Spleen (tissue), 13 donors: ENCODE measurements at regions of chr1 and their contacts with region 1.

Region 1: GRCh38 chr1:218345673-218346390 is 696 bp downstream of the TGFB2 start:
- DNase-seq: peak; percentile 89
- H3K4me3 ChIP-seq: peak overlapping the region; percentile 44 to 79 (median 58)
- H3K27ac ChIP-seq: peak overlapping the region in 7 of 8 donors; percentile 18 to 81 (median 72)
- H3K4me1 ChIP-seq: peaks cover 11 to 67% (median 50%) of the 10 kb centered on the region in 6 donors
- H3K27me3 ChIP-seq: peaks cover 0 to 32% (median 6%) of the 10 kb centered on the region in 7 donors
- CTCF ChIP-seq: no peak
- POLR2A ChIP-seq: no peak

Region 2: DNA sequence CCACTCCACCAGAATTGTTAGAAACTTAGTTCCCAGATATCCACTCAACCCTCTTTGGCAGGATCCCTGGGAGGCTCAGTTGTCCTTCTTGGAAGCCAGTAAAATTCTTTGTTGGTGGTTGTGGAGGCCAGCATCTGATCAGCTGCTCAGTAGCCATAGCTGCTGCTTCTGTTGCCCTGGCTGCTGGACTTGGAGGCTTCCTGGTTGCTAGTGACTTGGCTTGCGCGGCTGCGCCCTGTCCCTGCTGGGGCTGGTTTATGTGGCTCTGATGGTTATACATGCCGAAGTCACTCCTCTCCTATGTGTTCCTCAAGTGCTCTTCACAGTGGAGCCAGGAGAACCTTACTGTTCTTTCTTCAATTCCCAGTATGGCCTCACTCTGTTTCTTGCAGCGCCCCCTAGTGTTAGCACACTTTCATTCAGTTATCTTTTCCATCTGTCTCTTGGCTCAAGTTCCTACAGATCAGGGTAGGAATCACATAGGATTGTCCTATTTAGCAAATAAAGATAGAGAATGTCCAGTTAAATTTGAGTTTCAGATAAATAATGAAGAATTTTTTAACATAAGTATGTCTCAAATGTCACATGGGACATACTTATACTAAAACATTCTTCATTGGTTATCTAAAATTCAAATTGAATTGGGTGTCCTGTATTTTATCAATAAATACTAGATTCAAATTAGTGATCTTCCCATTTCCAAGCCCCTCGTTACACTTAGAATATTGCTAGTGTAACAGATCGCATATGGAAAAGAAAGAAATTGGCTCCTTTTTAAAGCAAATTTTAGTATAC is 175.7 kb after region 1 on chr1:
- intact Hi-C with region 1: loop called (anchors 10 kb)
- DNase-seq: no peak
- H3K4me3 ChIP-seq: no peak overlapping the region
- H3K27ac ChIP-seq: no peak overlapping the region
- H3K4me1 ChIP-seq: no peaks in the 10 kb centered on the region
- H3K27me3 ChIP-seq: peaks cover 0 to 13% (median 0%) of the 10 kb centered on the region in 7 donors
- CTCF ChIP-seq: peak in 10 of 11 experiments; percentile 25 to 71 (median 54)
- POLR2A ChIP-seq: no peak

Region 3: GRCh38 chr1:218817691-218818465 is 472.0 kb after region 1 on chr1:
- intact Hi-C with region 1: no loop called
- DNase-seq: no peak
- H3K4me3 ChIP-seq: no peak overlapping the region
- H3K27ac ChIP-seq: no peak overlapping the region
- H3K4me1 ChIP-seq: no peaks in the 10 kb centered on the region
- H3K27me3 ChIP-seq: no peaks in the 10 kb centered on the region
- CTCF ChIP-seq: no peak
- POLR2A ChIP-seq: no peak